BJ (cell line): ENCODE measurements at regions of chr15 and their contacts with region 1.

Region 1: GRCh38 chr15:43893956-43894355 is 67.2 kb downstream of the WDR76 start:
- DNase-seq: no peak
- H3K4me3 ChIP-seq: no peak overlapping the region
- H3K27me3 ChIP-seq: no peaks in the 10 kb centered on the region
- CTCF ChIP-seq: no peak

Region 2: GRCh38 chr15:44231842-44232241 is 337.9 kb after region 1 on chr15:
- CTCF ChIA-PET with region 1: no interaction called
- POLR2A ChIA-PET with region 1: interaction called, 16 read pairs
- DNase-seq: no peak
- H3K4me3 ChIP-seq: no peak overlapping the region
- H3K27me3 ChIP-seq: peaks cover 2% of the 10 kb centered on the region; the same call in 1 of the 2 replicates
- CTCF ChIP-seq: no peak